Endothelial cell of umbilical vein (primary cell): ENCODE measurements at regions of chr9 and their contacts with region 1.

Region 1: GRCh38 chr9:14466429-14466818 is 152.5 kb upstream of the NFIB start:
- DNase-seq: no peak
- H3K4me3 ChIP-seq: no peak overlapping the region
- H3K27ac ChIP-seq: no peak overlapping the region
- H3K4me1 ChIP-seq: peaks cover 10% of the 10 kb centered on the region
- H3K27me3 ChIP-seq: no peaks in the 10 kb centered on the region
- CTCF ChIP-seq: no peak
- POLR2A ChIP-seq: no peak

Region 2: GRCh38 chr9:14476961-14477360 is 10.5 kb after region 1 on chr9:
- CTCF ChIA-PET with region 1: interaction called, 11 read pairs
- POLR2A ChIA-PET with region 1: no interaction called
- dilution Hi-C with region 1: no loop called
- intact Hi-C with region 1: no loop called
- DNase-seq: no peak
- H3K4me3 ChIP-seq: no peak overlapping the region
- H3K27ac ChIP-seq: no peak overlapping the region
- H3K4me1 ChIP-seq: peaks cover 3% of the 10 kb centered on the region
- H3K27me3 ChIP-seq: no peaks in the 10 kb centered on the region
- CTCF ChIP-seq: no peak
- POLR2A ChIP-seq: no peak

Region 3: DNA sequence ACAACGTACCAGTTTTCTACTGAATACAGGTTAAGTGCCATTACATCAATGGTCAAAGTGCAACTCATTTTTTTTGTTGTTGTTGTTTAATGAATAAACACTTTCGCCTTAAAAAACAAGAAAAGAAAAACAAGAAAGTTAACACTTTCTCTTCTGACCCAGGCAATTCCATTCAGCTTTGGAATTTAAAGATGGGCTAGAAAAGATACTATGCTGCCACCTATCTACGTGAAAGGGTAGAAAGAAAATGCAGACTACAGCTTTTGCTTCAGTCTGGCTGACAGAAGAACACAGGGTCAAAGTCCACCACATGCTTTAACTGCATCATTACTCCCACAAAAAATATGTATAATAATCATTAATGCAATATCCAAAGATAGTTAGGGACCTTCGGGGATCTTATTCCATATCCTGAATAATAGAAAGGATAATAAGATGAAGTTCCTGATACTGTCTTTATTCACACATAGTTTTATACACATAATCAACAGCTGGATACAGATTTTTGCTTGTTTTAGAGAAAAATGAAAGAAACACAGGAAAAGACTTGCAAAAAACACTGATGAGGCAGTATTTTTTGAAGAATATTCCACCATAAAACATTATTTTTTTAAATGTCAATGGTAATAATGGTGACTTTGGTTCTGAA is 186.4 kb after region 1 on chr9:
- CTCF ChIA-PET with region 1: interaction called, 15 read pairs
- POLR2A ChIA-PET with region 1: no interaction called
- dilution Hi-C with region 1: no loop called
- intact Hi-C with region 1: loop called (anchors 1 kb)
- DNase-seq: peak; percentile 54
- H3K4me3 ChIP-seq: no peak overlapping the region
- H3K27ac ChIP-seq: no peak overlapping the region
- H3K4me1 ChIP-seq: no peaks in the 10 kb centered on the region
- H3K27me3 ChIP-seq: no peaks in the 10 kb centered on the region
- CTCF ChIP-seq: peak; percentile 29 to 30
- POLR2A ChIP-seq: no peak

Region 4: DNA sequence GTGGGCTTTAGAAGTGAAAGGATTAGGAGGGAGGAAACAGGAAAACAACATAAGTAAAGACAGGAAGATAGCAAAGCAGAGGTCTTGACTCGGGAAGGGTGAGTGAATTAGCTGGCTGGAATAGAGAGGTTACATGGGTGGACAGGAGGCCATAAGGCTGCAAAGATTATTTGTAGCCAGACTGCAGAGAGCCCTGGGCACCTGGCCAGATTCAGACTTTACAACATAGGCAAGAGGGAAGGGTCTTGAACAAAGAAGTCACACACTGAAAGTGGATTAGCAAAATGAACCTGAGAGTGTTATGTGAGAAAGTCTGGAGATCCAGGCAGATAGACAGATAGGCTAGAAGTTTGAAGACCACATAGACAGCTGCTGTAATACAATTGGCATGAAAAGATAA is 285.8 kb after region 1 on chr9:
- CTCF ChIA-PET with region 1: interaction called, 3 read pairs
- POLR2A ChIA-PET with region 1: no interaction called
- dilution Hi-C with region 1: no loop called
- intact Hi-C with region 1: loop called (anchors 5 kb)
- DNase-seq: peak; percentile 97
- H3K4me3 ChIP-seq: no peak overlapping the region
- H3K27ac ChIP-seq: peak overlapping the region; percentile 59
- H3K4me1 ChIP-seq: peaks cover 39% of the 10 kb centered on the region
- H3K27me3 ChIP-seq: no peaks in the 10 kb centered on the region
- CTCF ChIP-seq: no peak
- POLR2A ChIP-seq: peak; percentile 42

Region 5: DNA sequence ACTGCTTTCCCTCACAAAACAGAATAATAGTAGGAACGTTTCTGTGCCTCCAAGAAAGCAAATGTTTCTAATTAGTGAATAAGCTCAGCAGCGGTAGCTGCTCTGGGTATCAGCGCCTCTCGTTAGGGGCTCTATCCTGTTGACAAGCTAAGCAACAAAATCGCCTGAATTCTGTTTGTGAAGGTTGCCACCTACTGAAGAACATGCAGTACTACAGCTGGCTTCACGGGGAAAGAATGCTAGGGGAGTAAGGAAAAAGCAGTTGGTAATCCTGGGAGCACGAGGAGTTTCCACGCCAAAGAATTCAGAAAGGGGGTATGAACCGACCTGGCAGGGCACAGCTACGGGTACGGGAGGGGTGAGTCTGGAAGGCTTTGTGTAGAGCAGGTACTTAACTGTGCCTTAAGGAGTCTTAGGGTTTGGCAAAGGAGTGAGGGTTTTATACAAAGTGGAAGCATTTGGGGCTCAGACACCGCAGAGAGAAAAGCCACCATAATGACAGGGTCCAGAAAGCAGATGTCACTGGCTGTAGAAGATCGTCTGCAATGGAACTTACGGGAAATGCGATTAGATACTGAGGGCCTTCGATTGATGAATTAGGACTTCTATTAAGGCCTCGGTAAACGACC is 668.9 kb after region 1 on chr9:
- CTCF ChIA-PET with region 1: interaction called, 4 read pairs
- POLR2A ChIA-PET with region 1: no interaction called
- dilution Hi-C with region 1: no loop called
- intact Hi-C with region 1: loop called (anchors 10 kb)
- DNase-seq: peak; percentile 82
- H3K4me3 ChIP-seq: no peak overlapping the region
- H3K27ac ChIP-seq: no peak overlapping the region
- H3K4me1 ChIP-seq: no peaks in the 10 kb centered on the region
- H3K27me3 ChIP-seq: no peaks in the 10 kb centered on the region
- CTCF ChIP-seq: peak; percentile 79 to 91
- POLR2A ChIP-seq: no peak